Activated T-helper 1 cell treated with anti-CD3 and anti-CD28 coated beads, Interleukin-12 subunit alpha, Interleukin-12 subunit beta, Interleukin-2, Interleukin-4 antibody, amounts not matched to agents 30 ng/mL and 10 ng/mL and 1 ng/mL, durations not matched to agents 14 hours and 24 hours and 36 hours (primary cell): ENCODE measurements at regions of chr2 and their contacts with region 1.

Region 1: DNA sequence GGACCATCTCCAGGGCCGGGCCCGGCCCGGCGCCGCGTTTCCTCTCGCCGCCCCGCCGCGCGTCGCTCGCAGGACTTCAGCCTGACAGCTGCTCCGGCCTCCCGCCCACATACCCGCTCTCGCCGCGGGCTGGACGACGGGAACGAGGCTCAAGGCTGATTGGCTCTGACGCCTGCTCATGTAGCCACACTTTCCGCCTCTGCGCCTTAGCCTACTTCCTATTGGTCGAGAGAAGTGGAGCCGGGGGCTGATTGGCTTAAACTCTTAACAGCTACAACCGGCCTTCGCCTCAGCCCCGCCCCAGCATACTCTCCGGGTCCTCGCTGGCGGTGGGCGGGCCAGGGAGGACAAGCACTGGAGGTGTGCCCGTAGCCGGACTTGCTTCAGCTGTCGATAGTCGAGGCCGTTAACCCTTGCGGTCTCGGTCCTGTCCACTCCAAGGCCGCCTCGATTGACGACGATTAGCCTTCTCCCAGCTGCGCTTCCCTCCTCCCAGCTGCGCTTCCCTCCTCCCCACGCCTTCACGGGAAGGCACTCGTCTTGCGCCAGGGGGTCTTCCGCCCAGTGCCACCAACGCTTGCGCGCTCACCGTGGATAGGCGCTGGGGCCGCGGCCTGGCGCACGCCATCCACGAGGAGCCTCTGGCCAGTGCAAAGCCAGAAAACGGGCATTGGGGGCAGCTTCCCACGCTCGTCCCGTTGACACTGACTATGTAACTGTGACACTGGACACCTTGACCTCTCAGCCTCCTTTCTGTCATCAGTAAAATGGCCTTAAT is at the start of gene PRADC1:
- DNase-seq: peak; percentile 96
- H3K4me3 Mint-ChIP-seq: peak within 1 kb of the TSS; percentile 95
- H3K27ac Mint-ChIP-seq: peak within 1 kb of the TSS; percentile 96
- H3K4me1 Mint-ChIP-seq: peaks cover 28% of the 10 kb centered on the region
- H3K27me3 Mint-ChIP-seq: no peaks in the 10 kb centered on the region
- total RNA-seq, gene PRADC1: 16.6 and 18.6 TPM in 2 replicates

Region 2: GRCh38 chr2:72901426-72901825 is 331.9 kb before region 1 on chr2:
- intact Hi-C with region 1: no loop called
- DNase-seq: no peak
- H3K4me3 Mint-ChIP-seq: no peak overlapping the region
- H3K27ac Mint-ChIP-seq: no peak overlapping the region
- H3K4me1 Mint-ChIP-seq: no peaks in the 10 kb centered on the region
- H3K27me3 Mint-ChIP-seq: peaks cover 41% of the 10 kb centered on the region

Region 3: DNA sequence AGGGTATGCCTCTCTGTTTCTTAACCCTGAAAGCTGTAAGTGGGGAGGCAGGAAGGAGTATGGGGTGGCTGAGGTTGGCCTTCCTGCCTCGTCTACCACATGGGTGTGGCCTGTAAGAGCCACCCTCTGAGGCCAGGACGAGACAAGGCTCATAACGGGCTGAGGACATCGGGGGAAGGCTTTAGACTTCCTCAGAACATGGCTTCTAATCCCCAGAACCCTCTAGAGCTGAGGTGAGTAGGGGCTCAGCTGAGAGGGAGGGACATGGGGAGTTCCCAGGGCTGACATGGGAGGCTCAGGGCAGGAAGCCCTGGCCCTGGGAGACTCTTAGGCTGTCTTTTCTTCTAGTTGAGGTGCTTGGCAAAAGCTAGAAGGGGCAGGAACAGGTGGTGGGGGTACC is 279.4 kb before region 1 on chr2:
- intact Hi-C with region 1: no loop called
- DNase-seq: peak; percentile 47
- H3K4me3 Mint-ChIP-seq: peak overlapping the region; percentile 79
- H3K27ac Mint-ChIP-seq: peak overlapping the region; percentile 88
- H3K4me1 Mint-ChIP-seq: peaks cover 32% of the 10 kb centered on the region
- H3K27me3 Mint-ChIP-seq: no peaks in the 10 kb centered on the region

Region 4: GRCh38 chr2:73176881-73177644 is 56.3 kb before region 1 on chr2:
- intact Hi-C with region 1: loop called (anchors 1 kb)
- DNase-seq: peak; percentile 77
- H3K4me3 Mint-ChIP-seq: peak overlapping the region; percentile 84
- H3K27ac Mint-ChIP-seq: peak overlapping the region; percentile 50
- H3K4me1 Mint-ChIP-seq: peaks cover 26% of the 10 kb centered on the region
- H3K27me3 Mint-ChIP-seq: peaks cover 50% of the 10 kb centered on the region

Region 5: DNA sequence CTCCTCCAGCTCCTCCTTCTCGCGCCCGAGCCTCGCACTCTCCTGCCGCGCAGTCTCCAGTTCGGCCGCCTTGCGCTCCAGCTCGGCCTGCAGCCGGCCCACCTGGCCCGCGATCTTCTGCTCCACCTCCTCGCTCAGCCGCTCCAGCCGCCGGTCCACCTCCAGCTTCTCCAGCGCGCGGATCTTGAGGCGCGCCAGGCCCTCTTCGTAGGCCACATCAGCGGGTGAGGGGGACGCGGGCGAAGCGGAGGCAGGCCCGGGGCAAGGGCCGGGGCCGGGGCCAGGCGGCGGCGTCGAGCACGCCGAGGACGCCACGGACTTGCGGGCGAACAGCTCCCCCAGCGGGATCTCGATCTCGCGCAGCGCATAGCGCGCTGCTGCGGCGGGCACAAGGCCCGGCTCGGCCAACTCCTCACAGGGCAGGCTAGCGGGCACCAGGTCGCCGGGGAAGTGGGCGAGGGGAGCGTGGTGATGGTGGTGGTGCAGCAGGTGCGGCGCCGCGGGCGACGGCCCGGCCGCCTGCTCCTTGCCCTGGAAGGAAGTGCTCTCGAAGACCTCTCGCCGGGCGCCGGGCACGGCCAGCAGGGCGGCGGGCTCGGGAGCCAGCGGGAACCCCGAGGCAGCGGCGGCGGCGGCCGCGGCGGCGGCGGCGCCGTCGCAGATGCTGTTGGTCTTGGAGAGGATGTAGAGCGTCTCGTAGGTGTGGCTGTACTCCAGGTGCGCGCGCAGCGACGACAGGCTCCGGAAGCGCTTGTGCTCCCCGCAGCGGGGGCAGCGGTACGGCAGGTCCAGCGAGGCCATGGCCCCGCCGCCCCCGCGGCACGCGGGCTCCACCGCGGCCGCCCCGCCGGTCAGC is 35.7 kb after region 1 on chr2:
- intact Hi-C with region 1: loop called (anchors 1 kb)
- DNase-seq: peak; percentile 73
- H3K4me3 Mint-ChIP-seq: no peak overlapping the region
- H3K27ac Mint-ChIP-seq: no peak overlapping the region
- H3K4me1 Mint-ChIP-seq: peaks cover 29% of the 10 kb centered on the region
- H3K27me3 Mint-ChIP-seq: no peaks in the 10 kb centered on the region

Region 6: DNA sequence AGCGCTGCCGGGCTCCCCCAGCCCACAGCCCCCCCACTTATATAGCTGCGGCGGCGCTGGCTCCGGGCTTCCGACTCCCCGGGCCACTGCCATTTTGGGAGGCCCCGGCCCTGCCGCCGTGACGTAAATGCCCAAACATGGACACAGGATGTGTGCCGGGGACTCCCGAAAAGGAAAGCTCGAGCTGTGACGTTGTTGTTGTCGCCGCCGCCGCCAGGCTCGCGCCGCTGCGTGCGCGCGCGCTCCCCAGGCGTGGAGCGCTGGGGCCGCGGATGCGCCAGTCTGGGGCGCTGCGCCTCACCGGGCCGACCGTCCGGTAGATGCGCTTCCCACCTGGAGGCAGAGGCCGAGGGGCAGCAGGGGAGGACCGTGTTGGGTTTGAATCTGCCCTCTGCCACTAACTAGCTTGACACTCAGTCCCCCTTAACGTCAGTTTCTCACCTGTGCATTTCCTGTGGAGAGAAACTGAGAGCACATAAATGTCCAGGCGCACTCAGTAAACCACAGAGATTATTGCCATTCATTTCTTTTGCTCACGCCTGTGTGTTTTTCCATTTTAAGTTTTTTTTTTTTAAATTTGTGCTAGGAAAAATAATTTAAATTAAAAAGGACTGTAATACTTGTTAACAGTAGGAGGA is 60.3 kb after region 1 on chr2 and contains the start of gene EGR4:
- intact Hi-C with region 1: loop called (anchors 1 kb)
- DNase-seq: peak; percentile 91
- H3K4me3 Mint-ChIP-seq: peak within 1 kb of the TSS; percentile 75
- H3K27ac Mint-ChIP-seq: peak within 1 kb of the TSS; percentile 63
- H3K4me1 Mint-ChIP-seq: peaks cover 14% of the 10 kb centered on the region
- H3K27me3 Mint-ChIP-seq: peaks cover 72% of the 10 kb centered on the region
- total RNA-seq, gene EGR4: 1.9 TPM in 2 replicates

Region 7: DNA sequence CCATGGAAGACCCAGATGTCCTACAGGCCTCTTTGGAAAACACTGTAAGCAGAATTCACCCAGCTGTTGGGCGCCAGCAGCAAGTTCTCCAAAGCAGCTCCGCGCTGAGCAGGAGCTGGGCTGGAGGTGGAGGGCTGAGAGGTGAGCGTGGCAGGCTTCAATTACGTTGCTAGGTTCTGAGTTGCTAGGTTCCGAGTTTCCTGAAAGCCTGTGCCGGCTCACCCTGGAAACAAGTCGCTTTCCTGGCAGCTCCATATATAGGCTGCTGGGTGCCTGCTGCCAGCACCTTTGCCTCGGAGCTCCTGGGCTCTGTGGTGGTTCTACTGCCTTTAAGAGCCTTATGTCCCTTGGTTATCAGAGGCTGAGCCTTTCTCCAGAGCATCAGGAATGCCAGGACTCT is 74.4 kb after region 1 on chr2:
- intact Hi-C with region 1: no loop called
- DNase-seq: no peak
- H3K4me3 Mint-ChIP-seq: no peak overlapping the region
- H3K27ac Mint-ChIP-seq: no peak overlapping the region
- H3K4me1 Mint-ChIP-seq: no peaks in the 10 kb centered on the region
- H3K27me3 Mint-ChIP-seq: peaks cover 18% of the 10 kb centered on the region

Region 8: DNA sequence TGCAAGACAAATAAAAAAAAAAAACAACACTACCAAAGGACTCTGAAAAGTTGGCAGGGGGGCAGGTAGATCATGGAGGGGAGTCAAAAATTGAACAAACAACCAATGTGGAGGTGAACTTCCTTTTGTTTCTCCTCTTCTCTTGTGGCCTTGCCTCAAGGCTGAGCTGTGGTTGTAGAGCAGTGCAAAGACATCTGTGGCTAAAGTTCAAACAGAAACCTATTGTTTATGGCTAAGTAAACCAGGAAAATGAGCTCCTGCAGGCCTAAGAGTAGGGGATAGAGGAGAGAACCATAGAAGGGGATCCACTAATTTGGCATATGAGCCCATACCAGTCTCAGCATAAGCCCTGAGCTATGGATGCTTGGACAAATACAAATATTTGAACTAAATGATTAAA is 100.2 kb after region 1 on chr2:
- intact Hi-C with region 1: no loop called
- DNase-seq: no peak
- H3K4me3 Mint-ChIP-seq: no peak overlapping the region
- H3K27ac Mint-ChIP-seq: no peak overlapping the region
- H3K4me1 Mint-ChIP-seq: no peaks in the 10 kb centered on the region
- H3K27me3 Mint-ChIP-seq: peaks cover 26% of the 10 kb centered on the region

Region 9: DNA sequence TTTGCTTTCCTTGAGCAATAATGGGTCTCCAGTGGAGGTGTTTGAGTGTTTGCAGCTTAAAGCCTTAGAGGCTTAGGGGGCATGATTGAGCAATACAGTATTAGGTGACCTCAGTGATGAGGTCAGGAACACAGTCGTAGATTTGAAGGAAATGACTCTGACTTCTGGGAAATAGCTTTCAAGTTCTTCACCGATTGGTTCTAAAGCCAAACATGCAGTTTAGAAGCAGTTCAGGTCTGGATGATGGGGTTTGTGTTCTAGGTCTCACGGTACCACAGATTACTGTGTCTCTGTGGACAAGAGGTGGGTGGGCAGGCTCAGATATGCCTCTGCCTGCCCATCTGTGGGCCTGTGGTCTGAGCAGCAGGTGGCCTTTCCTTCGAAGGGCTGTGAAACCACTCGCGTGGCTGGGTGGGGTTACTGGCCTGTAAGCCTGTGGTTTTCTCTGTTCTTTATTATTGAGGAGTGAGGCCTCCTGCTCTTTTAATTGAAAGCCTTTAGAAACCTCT is 972.9 kb after region 1 on chr2:
- intact Hi-C with region 1: loop called (anchors 10 kb)
- DNase-seq: peak; percentile 52
- H3K4me3 Mint-ChIP-seq: peak overlapping the region; percentile 78
- H3K27ac Mint-ChIP-seq: peak overlapping the region; percentile 96
- H3K4me1 Mint-ChIP-seq: peaks cover 72% of the 10 kb centered on the region
- H3K27me3 Mint-ChIP-seq: no peaks in the 10 kb centered on the region

Region 10: GRCh38 chr2:74958274-74959105 is 1725.1 kb after region 1 on chr2 and contains the start of gene POLE4:
- intact Hi-C with region 1: loop called (anchors 5 kb)
- DNase-seq: peak; percentile 89
- H3K4me3 Mint-ChIP-seq: peak within 1 kb of the TSS; percentile 85
- H3K27ac Mint-ChIP-seq: peak within 1 kb of the TSS; percentile 89
- H3K4me1 Mint-ChIP-seq: peaks cover 66% of the 10 kb centered on the region
- H3K27me3 Mint-ChIP-seq: no peaks in the 10 kb centered on the region
- total RNA-seq, gene POLE4: 48.4 and 56.7 TPM in 2 replicates